ENCODE measurements at regions of chr11 and their contacts with region 1.

Region 1: DNA sequence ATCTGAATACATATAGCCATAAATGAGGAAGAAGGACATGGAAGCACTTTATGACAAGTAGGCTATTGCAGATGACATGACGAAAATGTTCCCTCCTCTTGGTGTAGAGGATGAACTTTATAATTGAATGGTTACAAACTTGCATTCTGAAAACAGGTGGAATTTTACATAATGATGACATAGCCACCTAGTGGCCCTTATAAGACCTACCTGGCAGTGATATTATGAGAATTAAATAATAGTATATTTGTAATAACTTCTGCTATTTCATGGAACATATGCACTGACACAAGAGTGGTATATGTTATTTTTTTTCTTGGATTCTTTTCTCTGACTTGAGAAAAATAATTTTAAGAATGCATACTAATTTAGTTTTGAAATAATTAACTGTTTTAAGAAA is 22.9 kb downstream of the TRIM22 start:
- DNase-seq: no peak
- H3K4me3 ChIP-seq: no peak overlapping the region
- H3K27ac ChIP-seq: no peak overlapping the region
- H3K27me3 ChIP-seq: no peaks in the 10 kb centered on the region
- CTCF ChIP-seq: peak; percentile 52

Region 2: GRCh38 chr11:5620646-5621521 is 91.6 kb before region 1 on chr11:
- CTCF ChIA-PET with region 1: interaction called, 12 read pairs
- POLR2A ChIA-PET with region 1: no interaction called
- DNase-seq: peak; percentile 78
- H3K4me3 ChIP-seq: no peak overlapping the region
- H3K27ac ChIP-seq: peak overlapping the region; percentile 68
- H3K27me3 ChIP-seq: no peaks in the 10 kb centered on the region
- CTCF ChIP-seq: no peak

Region 3: GRCh38 chr11:5700421-5701054 is 12.0 kb before region 1 on chr11:
- CTCF ChIA-PET with region 1: no interaction called
- POLR2A ChIA-PET with region 1: no interaction called
- DNase-seq: no peak
- H3K4me3 ChIP-seq: no peak overlapping the region
- H3K27ac ChIP-seq: no peak overlapping the region
- H3K27me3 ChIP-seq: no peaks in the 10 kb centered on the region
- CTCF ChIP-seq: no peak